IMR-90 (cell line): ENCODE measurements at regions of chrX and their contacts with region 1.

Region 1: DNA sequence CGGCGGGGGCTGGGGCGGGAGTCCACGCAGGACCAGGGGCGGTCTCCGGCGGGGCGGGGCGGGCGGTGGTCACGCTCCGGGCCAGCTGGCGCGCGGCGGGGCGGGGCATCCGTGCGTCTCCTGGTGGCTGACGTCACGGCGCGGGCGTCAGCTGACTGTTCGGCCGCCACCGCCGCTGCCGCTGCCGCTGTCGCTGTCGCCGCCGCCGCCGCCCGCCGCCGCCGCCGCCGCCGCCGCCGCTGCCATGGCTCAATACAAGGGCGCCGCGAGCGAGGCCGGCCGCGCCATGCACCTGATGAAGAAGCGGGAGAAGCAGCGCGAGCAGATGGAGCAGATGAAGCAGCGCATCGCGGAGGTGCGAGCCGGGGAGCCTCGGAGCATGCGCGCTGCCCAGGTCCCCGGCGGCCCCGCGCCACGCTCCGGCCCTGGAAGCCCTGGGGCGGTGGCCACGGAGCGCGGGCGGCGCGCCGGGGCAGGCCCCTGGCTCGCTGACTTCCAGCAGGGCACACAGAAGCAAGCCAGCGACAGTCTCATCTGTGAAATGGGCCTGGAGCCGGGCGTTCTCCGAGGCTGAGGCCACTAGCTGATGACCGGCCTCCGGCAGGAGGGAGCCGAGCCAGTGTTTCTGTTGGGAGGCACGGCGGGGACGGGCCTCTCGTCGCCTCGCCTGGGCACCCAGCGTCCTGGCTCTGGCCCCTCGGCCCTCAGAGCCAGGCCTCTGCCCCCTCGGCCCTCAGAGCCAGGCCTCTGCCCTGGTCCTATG is at the start of gene FAM50A:
- DNase-seq: peak; percentile 42
- ATAC-seq: peak; percentile 91
- H3K4me3 ChIP-seq: peak within 1 kb of the TSS; percentile 94
- H3K27ac ChIP-seq: peak within 1 kb of the TSS; percentile 90
- H3K4me1 ChIP-seq: peaks cover 8% of the 10 kb centered on the region; the same call in 1 of the 2 replicates
- H3K27me3 ChIP-seq: no peaks in the 10 kb centered on the region
- CTCF ChIP-seq: no peak
- POLR2A ChIP-seq: no peak
- RAD21 ChIP-seq: no peak
- total RNA-seq, gene FAM50A: 46.4 and 65.5 TPM in 2 replicates

Region 2: GRCh38 chrX:154411322-154411980 is 32.7 kb before region 1 on chrX and contains the start of gene TAFAZZIN:
- CTCF ChIA-PET with region 1: no interaction called
- POLR2A ChIA-PET with region 1: no interaction called
- dilution Hi-C with region 1: no loop called
- in situ Hi-C with region 1: no loop called
- intact Hi-C with region 1: loop called (anchors 1 kb)
- DNase-seq: peak; percentile 52
- ATAC-seq: peak; percentile 73
- H3K4me3 ChIP-seq: peak within 1 kb of the TSS; percentile 94
- H3K27ac ChIP-seq: peak within 1 kb of the TSS; percentile 87
- H3K4me1 ChIP-seq: peaks cover 4% of the 10 kb centered on the region
- H3K27me3 ChIP-seq: no peaks in the 10 kb centered on the region
- CTCF ChIP-seq: no peak
- POLR2A ChIP-seq: no peak
- RAD21 ChIP-seq: no peak
- total RNA-seq, gene TAFAZZIN: 4.4 and 4.8 TPM in 2 replicates